A673 (cell line): ENCODE measurements at regions of chr2 and their contacts with region 1.

Region 1: DNA sequence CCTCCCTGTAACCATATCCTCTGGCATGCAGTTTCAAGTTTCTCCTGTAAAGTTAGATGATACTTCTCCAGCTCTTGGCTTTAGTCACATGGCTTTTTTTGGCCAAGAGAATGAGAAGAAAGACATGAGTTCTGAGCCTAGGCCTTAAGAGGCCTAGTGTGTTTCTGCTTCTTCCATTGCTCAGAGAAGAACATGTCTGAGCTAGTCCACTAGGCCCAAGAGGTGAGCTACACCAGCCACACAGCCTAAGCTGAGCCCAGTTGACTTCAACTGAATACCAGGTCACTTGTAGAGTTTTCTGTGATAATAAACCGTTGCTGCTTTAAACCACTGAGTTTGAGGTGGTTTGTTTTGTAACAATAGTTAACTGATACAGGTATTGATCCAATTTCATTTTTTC is 19.9 kb upstream of the EFEMP1 start:
- DNase-seq: no peak
- H3K4me3 ChIP-seq: no peak overlapping the region
- H3K27ac ChIP-seq: no peak overlapping the region
- H3K4me1 ChIP-seq: no peaks in the 10 kb centered on the region
- H3K27me3 ChIP-seq: peaks cover 11% of the 10 kb centered on the region
- CTCF ChIP-seq: no peak

Region 2: DNA sequence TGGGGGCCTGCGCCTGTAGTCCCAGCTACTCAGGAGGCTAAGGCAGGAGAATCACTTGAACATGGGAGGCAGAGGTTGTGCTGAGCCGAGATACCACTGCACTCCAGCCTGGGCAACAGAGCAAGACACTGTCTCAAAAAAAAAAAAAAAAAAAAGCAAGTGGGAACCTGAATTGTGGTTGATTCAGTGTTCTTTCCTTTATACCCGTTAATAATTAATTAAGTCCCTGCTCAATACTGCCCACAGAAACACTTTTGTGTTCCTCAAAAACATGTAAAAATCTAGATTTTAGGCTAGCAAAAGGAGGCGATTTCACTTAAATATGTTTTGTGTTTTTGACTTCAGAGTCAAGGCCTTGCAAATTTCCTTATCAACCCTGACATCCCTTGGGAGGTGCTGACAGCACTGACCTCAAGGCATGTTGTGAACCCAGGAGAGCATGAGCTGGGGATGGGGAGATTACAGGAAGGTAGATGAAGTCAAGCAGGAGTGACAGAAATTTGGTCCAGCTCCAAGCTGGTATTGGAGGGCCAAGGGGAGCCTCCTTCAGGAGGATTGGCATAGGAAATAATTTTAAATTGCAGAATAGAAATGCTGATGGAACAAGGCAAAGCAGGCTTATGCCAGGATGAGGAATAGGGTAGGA is 160.8 kb before region 1 on chr2:
- CTCF ChIA-PET with region 1: no interaction called
- POLR2A ChIA-PET with region 1: no interaction called
- intact Hi-C with region 1: no loop called
- DNase-seq: no peak
- H3K4me3 ChIP-seq: no peak overlapping the region
- H3K27ac ChIP-seq: no peak overlapping the region
- H3K4me1 ChIP-seq: no peaks in the 10 kb centered on the region
- H3K27me3 ChIP-seq: peaks cover 11% of the 10 kb centered on the region
- CTCF ChIP-seq: no peak

Region 3: DNA sequence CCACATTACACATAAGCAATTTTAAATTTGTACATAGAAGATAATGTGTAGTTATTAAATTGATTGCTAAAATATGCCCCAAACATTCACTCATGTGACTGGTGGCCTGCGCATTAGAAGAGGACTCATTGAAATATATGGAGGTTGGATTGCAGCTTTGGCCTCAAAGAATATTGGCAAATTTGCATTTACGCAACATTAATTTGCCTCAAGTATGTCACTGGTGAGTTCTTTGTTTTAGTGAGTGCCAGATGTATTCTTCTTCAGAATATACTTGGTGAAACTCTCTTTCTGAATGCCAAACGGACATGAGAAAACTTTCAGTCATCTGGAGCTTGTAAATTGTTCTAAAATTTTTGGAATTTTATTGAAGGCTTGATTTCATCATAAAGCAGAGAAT is 14.0 kb before region 1 on chr2:
- CTCF ChIA-PET with region 1: no interaction called
- POLR2A ChIA-PET with region 1: no interaction called
- intact Hi-C with region 1: no loop called
- DNase-seq: no peak
- H3K4me3 ChIP-seq: no peak overlapping the region
- H3K27ac ChIP-seq: no peak overlapping the region
- H3K4me1 ChIP-seq: no peaks in the 10 kb centered on the region
- H3K27me3 ChIP-seq: peaks cover 72% of the 10 kb centered on the region
- CTCF ChIP-seq: no peak

Region 4: DNA sequence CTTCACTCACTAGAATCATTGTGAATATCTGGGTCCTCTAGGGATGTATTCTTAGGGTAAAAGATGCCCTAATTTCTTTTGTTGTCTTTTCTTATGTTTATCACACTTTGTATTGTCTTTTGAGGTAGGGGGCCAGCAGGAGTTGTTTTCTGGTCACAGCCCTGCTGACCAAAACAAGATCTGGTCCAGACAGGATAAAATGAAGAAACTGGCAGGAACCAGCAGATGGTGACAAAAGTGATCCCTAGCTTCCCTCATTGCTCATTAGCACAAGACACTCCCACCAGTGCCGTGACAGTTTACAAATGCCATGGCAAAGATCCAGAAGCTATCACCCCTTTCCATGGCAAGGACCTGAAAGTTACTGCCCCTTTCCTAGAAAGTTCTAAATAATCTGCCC is 158.6 kb after region 1 on chr2:
- CTCF ChIA-PET with region 1: interaction called, 11 read pairs
- POLR2A ChIA-PET with region 1: no interaction called
- intact Hi-C with region 1: no loop called
- DNase-seq: no peak
- H3K4me3 ChIP-seq: no peak overlapping the region
- H3K27ac ChIP-seq: no peak overlapping the region
- H3K4me1 ChIP-seq: no peaks in the 10 kb centered on the region
- H3K27me3 ChIP-seq: peaks cover 15% of the 10 kb centered on the region
- CTCF ChIP-seq: no peak